ENCODE measurements at regions of chr9 and their contacts with region 1.

Region 1: GRCh38 chr9:124133727-124134126 is 122.2 kb downstream of the LHX2 start:
- DNase-seq: no peak
- H3K4me3 ChIP-seq: no peak overlapping the region
- H3K27ac ChIP-seq: no peak overlapping the region
- H3K4me1 ChIP-seq: no peaks in the 10 kb centered on the region
- H3K27me3 ChIP-seq: no peaks in the 10 kb centered on the region
- CTCF ChIP-seq: no peak
- EP300 ChIP-seq: no peak
- POLR2A ChIP-seq: no peak

Region 2: GRCh38 chr9:122252796-122253195 is 1880.9 kb before region 1 on chr9:
- intact Hi-C with region 1: no loop called
- DNase-seq: no peak
- H3K4me3 ChIP-seq: no peak overlapping the region
- H3K27ac ChIP-seq: no peak overlapping the region
- H3K4me1 ChIP-seq: peaks cover 1% of the 10 kb centered on the region
- H3K27me3 ChIP-seq: no peaks in the 10 kb centered on the region
- CTCF ChIP-seq: no peak
- EP300 ChIP-seq: no peak
- POLR2A ChIP-seq: no peak

Region 3: GRCh38 chr9:123929870-123930831 is 203.6 kb before region 1 on chr9 and contains the start of gene DENND1A:
- intact Hi-C with region 1: no loop called
- DNase-seq: peak; percentile 88 to 93 (median 92)
- H3K4me3 ChIP-seq: peak within 1 kb of the TSS; percentile 78
- H3K27ac ChIP-seq: peak within 1 kb of the TSS in 1 of 2 donors; percentile 45
- H3K4me1 ChIP-seq: peaks cover 9% of the 10 kb centered on the region
- H3K27me3 ChIP-seq: no peaks in the 10 kb centered on the region
- CTCF ChIP-seq: no peak
- EP300 ChIP-seq: no peak
- POLR2A ChIP-seq: peak; percentile 23
- total RNA-seq, gene DENND1A: 11.6 to 24.5 (median 18.7) TPM

Region 4: DNA sequence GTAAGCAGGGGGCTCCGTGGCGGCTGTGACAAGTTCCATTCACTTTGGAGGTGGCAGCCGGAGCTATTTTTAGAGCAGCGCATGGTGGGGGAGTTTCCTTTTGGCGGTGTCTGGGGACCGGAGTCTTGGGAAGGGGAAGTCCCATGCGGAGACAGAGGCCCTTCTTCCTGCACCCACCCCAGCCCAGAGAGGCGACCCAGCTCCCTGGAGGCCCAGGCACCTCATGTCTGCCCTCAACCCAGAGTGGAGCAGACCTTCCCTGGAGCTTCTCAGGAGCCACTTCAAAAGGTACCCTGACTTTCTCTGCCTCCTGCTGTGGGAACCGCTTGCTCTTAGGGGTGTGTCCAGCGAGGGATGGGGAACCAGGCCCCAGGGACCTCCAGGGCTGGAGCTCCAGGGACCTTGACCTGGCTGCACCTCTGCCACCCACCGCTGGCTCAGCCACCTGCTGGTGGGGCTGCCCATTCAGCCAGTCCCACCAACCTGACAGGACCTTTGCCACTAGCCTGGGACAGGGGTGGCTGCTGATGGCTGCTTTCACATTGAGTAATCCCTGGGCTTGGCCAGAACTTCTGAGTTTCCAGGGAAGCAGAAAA is 158.2 kb after region 1 on chr9:
- intact Hi-C with region 1: loop called in 1 of 4 experiments (anchors 10 kb)
- DNase-seq: no peak
- H3K4me3 ChIP-seq: no peak overlapping the region
- H3K27ac ChIP-seq: no peak overlapping the region
- H3K4me1 ChIP-seq: peaks cover 14% of the 10 kb centered on the region
- H3K27me3 ChIP-seq: no peaks in the 10 kb centered on the region
- CTCF ChIP-seq: no peak
- EP300 ChIP-seq: no peak
- POLR2A ChIP-seq: no peak

Measured in ovary (tissue), 10 donors.